Kidney (tissue), 22 donors: ENCODE measurements at regions of chr3 and their contacts with region 1.

Region 1: GRCh38 chr3:149657926-149658733 is at the start of gene WWTR1:
- DNase-seq: peak; percentile 98 to 99 (median 98)
- H3K4me3 ChIP-seq: peak within 1 kb of the TSS; percentile 80 to 94 (median 89)
- H3K27ac ChIP-seq: peak within 1 kb of the TSS; percentile 97 to 99
- H3K4me1 ChIP-seq: peaks cover 2 to 19% (median 17%) of the 10 kb centered on the region in 3 donors
- H3K27me3 ChIP-seq: no peaks in the 10 kb centered on the region
- CTCF ChIP-seq: no peak
- total RNA-seq, gene WWTR1: 117 TPM

Region 2: GRCh38 chr3:149366941-149367840 is 290.9 kb before region 1 on chr3:
- intact Hi-C with region 1: no loop called
- DNase-seq: no peak
- H3K4me3 ChIP-seq: no peak overlapping the region
- H3K27ac ChIP-seq: no peak overlapping the region
- H3K4me1 ChIP-seq: peaks cover 0 to 12% (median 2%) of the 10 kb centered on the region in 3 donors
- H3K27me3 ChIP-seq: no peaks in the 10 kb centered on the region
- CTCF ChIP-seq: no peak

Region 3: GRCh38 chr3:149536429-149536828 is 121.7 kb before region 1 on chr3:
- intact Hi-C with region 1: loop called (anchors 10 kb)
- DNase-seq: peak; percentile 62 to 85 (median 71)
- H3K4me3 ChIP-seq: no peak overlapping the region
- H3K27ac ChIP-seq: peak overlapping the region; percentile 3 to 54
- H3K4me1 ChIP-seq: peaks cover 6 to 31% (median 26%) of the 10 kb centered on the region in 3 donors
- H3K27me3 ChIP-seq: no peaks in the 10 kb centered on the region
- CTCF ChIP-seq: no peak

Region 4: GRCh38 chr3:149752051-149752787 is 94.1 kb after region 1 on chr3 and contains the start of gene COMMD2:
- intact Hi-C with region 1: no loop called
- DNase-seq: peak; percentile 80 to 94 (median 91)
- H3K4me3 ChIP-seq: peak within 1 kb of the TSS; percentile 88 to 93 (median 92)
- H3K27ac ChIP-seq: peak within 1 kb of the TSS in 1 of 2 donors; percentile 74
- H3K4me1 ChIP-seq: peaks cover 0 to 7% (median 0%) of the 10 kb centered on the region in 3 donors
- H3K27me3 ChIP-seq: no peaks in the 10 kb centered on the region
- CTCF ChIP-seq: peak; percentile 32
- total RNA-seq, gene COMMD2: 43.4 TPM